GM10248 (cell line): ENCODE measurements at regions of chr9 and their contacts with region 1.

Region 1: DNA sequence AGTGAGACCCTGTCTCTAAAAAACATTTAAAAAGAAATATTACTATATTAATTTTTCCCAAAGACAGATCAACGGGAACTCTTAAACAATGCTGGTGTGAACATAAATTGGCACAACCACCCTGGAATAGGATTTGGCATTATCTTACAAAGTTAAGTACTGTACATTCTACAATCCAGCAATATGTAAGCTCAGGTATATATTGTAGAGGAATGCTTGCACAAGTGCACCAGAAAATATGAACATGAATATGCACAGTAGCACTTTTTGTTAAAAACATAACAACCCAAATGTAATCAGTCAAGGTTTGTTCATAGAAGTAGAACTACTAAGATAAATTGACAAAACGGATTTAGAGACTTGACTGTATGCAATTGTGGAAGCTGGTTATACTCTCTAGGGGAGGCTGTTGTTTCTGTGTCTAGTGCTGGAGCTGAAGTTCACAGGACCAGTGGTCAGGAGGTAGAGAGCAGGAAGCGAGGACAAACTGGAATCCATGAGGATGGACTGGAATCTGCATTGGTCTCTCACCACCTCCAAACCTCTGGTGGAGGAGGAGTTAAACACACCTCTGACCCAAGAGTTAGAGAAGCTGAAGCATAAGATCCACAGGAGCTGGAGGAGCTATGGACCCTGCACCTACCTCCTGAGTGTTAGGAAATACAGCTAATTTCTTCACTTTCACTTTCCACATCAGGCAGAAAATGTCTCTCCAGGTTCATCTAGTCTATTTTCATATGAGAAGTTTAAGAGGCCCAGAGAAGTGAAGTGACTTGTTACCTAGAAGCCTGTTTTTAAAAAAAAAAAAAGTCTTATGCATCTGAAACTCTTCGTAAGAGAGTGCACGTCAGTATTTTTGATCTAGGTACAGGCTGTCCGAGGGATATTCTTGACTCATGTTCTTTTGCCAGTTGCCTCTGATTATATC is 20.3 kb upstream of the RIC1 start:
- DNase-seq: no peak
- CTCF ChIP-seq: peak; percentile 23

Region 2: DNA sequence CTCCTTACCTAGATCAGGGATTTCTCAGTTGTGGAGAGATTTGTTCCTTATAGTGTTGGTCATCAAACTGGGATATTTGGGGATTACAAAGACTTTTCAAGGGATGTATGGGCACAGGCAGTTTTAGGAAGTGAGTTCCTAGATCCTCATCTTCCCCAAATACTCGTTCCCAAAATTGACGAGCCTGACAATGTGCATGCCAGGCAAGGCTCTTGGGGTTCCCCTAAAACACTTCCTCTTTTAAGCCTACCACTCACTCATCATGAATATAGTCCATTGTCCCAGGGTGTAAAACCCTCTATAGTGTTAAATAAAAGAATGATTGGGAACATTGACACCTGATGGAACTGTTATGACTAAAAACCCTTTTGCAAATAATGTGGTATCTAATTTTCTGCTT is 71.9 kb before region 1 on chr9:
- CTCF ChIA-PET with region 1: no interaction called
- POLR2A ChIA-PET with region 1: no interaction called
- DNase-seq: peak; percentile 42
- CTCF ChIP-seq: no peak

Region 3: DNA sequence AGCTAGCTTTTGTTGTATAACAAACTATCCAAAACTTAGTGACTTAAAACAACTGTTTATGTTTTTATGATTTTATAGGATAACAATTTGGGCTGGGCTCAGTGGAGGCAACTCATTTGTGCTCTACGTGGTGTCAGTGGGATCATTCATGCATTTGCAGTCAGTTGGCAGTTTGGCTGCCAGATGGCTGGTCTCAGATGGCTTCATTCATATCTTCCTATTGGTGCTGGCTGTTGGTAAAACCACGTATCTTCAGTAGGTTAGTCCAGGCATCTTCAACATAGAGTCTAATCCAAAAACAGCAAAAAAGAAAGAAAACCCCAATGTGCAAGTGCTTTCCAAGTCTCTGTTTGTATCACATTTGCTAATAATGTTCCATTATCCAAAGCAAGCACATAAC is 31.3 kb before region 1 on chr9:
- CTCF ChIA-PET with region 1: no interaction called
- POLR2A ChIA-PET with region 1: no interaction called
- DNase-seq: no peak
- CTCF ChIP-seq: no peak

Region 4: DNA sequence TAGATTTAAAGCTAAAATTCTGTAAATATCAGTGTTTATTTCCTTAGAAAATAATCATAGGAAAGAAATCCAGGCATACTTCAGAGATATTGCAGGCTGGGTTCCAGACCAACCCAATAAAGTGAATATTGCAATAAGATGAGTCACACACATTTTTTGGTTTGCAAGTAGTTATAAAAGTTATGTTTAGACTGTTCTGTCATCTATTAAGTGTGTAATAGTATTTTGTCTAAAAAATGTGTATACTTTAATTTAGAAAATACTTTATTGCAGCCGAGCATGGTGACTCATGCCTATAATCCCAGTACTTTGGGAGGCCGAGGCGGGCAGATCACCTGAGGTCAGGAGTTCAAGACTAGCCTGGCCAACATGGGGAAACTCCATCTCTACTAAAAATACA is 13.5 kb after region 1 on chr9:
- CTCF ChIA-PET with region 1: interaction called, 16 read pairs
- POLR2A ChIA-PET with region 1: interaction called, 4 read pairs
- DNase-seq: no peak
- CTCF ChIP-seq: no peak

Region 5: GRCh38 chr9:5628530-5629311 is 20.2 kb after region 1 on chr9 and contains the start of gene RIC1:
- CTCF ChIA-PET with region 1: interaction called, 16 read pairs
- POLR2A ChIA-PET with region 1: interaction called, 4 read pairs
- DNase-seq: peak; percentile 96
- CTCF ChIP-seq: no peak